B cell (primary cell): ENCODE measurements at regions of chrX and their contacts with region 1.

Region 1: GRCh38 chrX:48801280-48802088 is at the start of gene HDAC6:
- DNase-seq: peak; percentile 97
- ATAC-seq: peak; percentile 80
- H3K4me3 ChIP-seq: peak within 1 kb of the TSS; percentile 65 to 82 (median 76)
- H3K4me3 Mint-ChIP-seq: peak within 1 kb of the TSS; percentile 96
- H3K27ac ChIP-seq: peak within 1 kb of the TSS; percentile 95 to 96
- H3K27ac Mint-ChIP-seq: peak within 1 kb of the TSS; percentile 98
- H3K4me1 ChIP-seq: peaks cover 4 to 16% of the 10 kb centered on the region in 2 donors
- H3K4me1 Mint-ChIP-seq: peaks cover 14% of the 10 kb centered on the region
- H3K27me3 ChIP-seq: no peaks in the 10 kb centered on the region
- H3K27me3 Mint-ChIP-seq: no peaks in the 10 kb centered on the region
- CTCF ChIP-seq: no peak
- total RNA-seq, gene HDAC6: 168 and 170 TPM in 2 replicates

Region 2: GRCh38 chrX:48737213-48737938 is 64.1 kb before region 1 on chrX:
- CTCF ChIA-PET with region 1: no interaction called
- POLR2A ChIA-PET with region 1: interaction called, 9 read pairs
- intact Hi-C with region 1: loop called (anchors 1 kb)
- DNase-seq: peak; percentile 94
- ATAC-seq: peak; percentile 98
- H3K4me3 ChIP-seq: peak overlapping the region; percentile 15 to 75 (median 67)
- H3K4me3 Mint-ChIP-seq: peak overlapping the region; percentile 98
- H3K27ac ChIP-seq: peak overlapping the region; percentile 85 to 91
- H3K27ac Mint-ChIP-seq: peak overlapping the region; percentile 96
- H3K4me1 ChIP-seq: peaks cover 0 to 15% of the 10 kb centered on the region in 2 donors
- H3K4me1 Mint-ChIP-seq: peaks cover 13% of the 10 kb centered on the region
- H3K27me3 ChIP-seq: no peaks in the 10 kb centered on the region
- H3K27me3 Mint-ChIP-seq: no peaks in the 10 kb centered on the region
- CTCF ChIP-seq: no peak

Region 3: GRCh38 chrX:49019599-49020249 is 218.2 kb after region 1 on chrX:
- CTCF ChIA-PET with region 1: no interaction called
- POLR2A ChIA-PET with region 1: no interaction called
- intact Hi-C with region 1: no loop called
- DNase-seq: no peak
- ATAC-seq: no peak
- H3K4me3 ChIP-seq: no peak overlapping the region
- H3K4me3 Mint-ChIP-seq: no peak overlapping the region
- H3K27ac ChIP-seq: no peak overlapping the region
- H3K27ac Mint-ChIP-seq: no peak overlapping the region
- H3K4me1 ChIP-seq: no peaks in the 10 kb centered on the region
- H3K4me1 Mint-ChIP-seq: no peaks in the 10 kb centered on the region
- H3K27me3 ChIP-seq: no peaks in the 10 kb centered on the region
- H3K27me3 Mint-ChIP-seq: no peaks in the 10 kb centered on the region
- CTCF ChIP-seq: no peak